Heart right ventricle (tissue), 16 donors: ENCODE measurements at regions of chr12 and their contacts with region 1.

Region 1: GRCh38 chr12:51970904-51971646 is 19.6 kb downstream of the ACVR1B start:
- DNase-seq: no peak
- ATAC-seq: no peak
- H3K4me3 ChIP-seq: no peak overlapping the region
- H3K27ac ChIP-seq: peak overlapping the region in 1 of 10 donors; percentile 87
- H3K4me1 ChIP-seq: peaks cover 0 to 63% (median 37%) of the 10 kb centered on the region in 9 donors
- H3K27me3 ChIP-seq: no peaks in the 10 kb centered on the region
- CTCF ChIP-seq: peak in 6 of 9 donors; percentile 18 to 58 (median 31)

Region 2: GRCh38 chr12:51752234-51752889 is 218.7 kb before region 1 on chr12:
- intact Hi-C with region 1: no loop called
- DNase-seq: peak; percentile 56 to 76
- ATAC-seq: peak; percentile 84 to 95 (median 92)
- H3K4me3 ChIP-seq: no peak overlapping the region
- H3K27ac ChIP-seq: peak overlapping the region in 7 of 10 donors; percentile 6 to 67 (median 46)
- H3K4me1 ChIP-seq: peaks cover 0 to 20% (median 14%) of the 10 kb centered on the region in 9 donors
- H3K27me3 ChIP-seq: no peaks in the 10 kb centered on the region
- CTCF ChIP-seq: no peak

Region 3: GRCh38 chr12:51823875-51824565 is 147.1 kb before region 1 on chr12:
- intact Hi-C with region 1: loop called in 1 of 10 experiments (anchors 10 kb)
- DNase-seq: peak in 1 of 2 donors; percentile 28
- ATAC-seq: peak in 6 of 8 donors; percentile 23 to 59 (median 39)
- H3K4me3 ChIP-seq: no peak overlapping the region
- H3K27ac ChIP-seq: no peak overlapping the region
- H3K4me1 ChIP-seq: peaks cover 0 to 36% (median 0%) of the 10 kb centered on the region in 9 donors
- H3K27me3 ChIP-seq: peaks cover 0 to 25% (median 13%) of the 10 kb centered on the region in 7 donors
- CTCF ChIP-seq: peak; percentile 13 to 64 (median 55)

Region 4: DNA sequence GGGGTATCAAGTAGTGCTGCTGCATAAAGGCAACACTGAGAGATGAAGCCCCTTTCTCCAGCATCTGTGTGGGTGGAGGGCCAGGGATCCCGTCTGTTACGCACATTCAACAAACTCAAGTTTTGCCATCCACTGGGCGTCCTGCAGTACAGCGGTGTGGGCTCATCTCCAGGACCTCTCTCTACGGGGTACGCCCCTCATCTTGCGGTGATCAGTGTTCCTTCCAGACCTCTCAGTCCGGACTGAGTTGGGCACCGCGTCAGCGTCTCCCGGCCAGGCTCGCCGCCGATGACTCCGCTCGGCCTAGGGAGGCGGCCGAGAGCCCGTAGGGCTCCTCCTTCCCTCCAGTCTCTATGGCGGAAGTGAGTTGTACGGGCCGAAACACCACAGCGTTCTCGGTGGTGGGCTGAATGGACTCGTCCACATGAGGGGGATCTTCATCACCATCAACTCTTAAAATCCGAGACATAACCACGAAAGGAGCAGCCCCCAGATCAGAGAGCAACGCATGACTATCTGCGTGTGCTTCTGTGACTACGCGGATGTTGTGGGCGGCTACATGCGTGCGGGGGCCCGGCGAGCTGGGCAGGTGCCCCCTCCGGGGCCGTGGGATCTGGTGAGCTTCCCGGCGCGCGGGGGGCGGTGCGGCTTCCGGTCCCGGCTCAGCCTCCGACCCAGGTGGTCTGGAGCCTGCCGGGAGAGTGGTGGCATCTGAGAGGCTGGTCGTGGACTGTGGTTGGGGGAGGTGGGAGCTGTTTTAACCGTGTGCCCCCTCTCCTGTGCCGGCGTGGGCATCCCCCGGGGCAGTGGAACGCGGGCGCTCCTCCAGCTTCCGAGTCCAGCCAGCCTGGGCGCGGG is 98.5 kb after region 1 on chr12 and contains the start of gene ATG101:
- intact Hi-C with region 1: no loop called
- DNase-seq: peak; percentile 88 to 93
- ATAC-seq: peak; percentile 96 to 98 (median 97)
- H3K4me3 ChIP-seq: peak within 1 kb of the TSS; percentile 68 to 98 (median 82)
- H3K27ac ChIP-seq: peak within 1 kb of the TSS; percentile 64 to 96 (median 93)
- H3K4me1 ChIP-seq: peaks cover 12 to 54% (median 33%) of the 10 kb centered on the region in 9 donors
- H3K27me3 ChIP-seq: no peaks in the 10 kb centered on the region
- CTCF ChIP-seq: peak; percentile 49 to 87 (median 67)
- total RNA-seq, gene ATG101: 17.5 to 31.8 (median 22.2) TPM